Activated CD4-positive, alpha-beta T cell treated with anti-CD3 and anti-CD28 coated beads, Interleukin-2, amount 10 ng/mL, durations not matched to agents 24 days and 14 days (primary cell): ENCODE measurements at regions of chr12 and their contacts with region 1.

Region 1: GRCh38 chr12:73769337-73769736 is 768.3 kb upstream of the ATXN7L3B start:
- DNase-seq: no peak
- H3K4me3 Mint-ChIP-seq: no peak overlapping the region
- H3K27ac Mint-ChIP-seq: no peak overlapping the region
- H3K4me1 Mint-ChIP-seq: no peaks in the 10 kb centered on the region
- H3K27me3 Mint-ChIP-seq: no peaks in the 10 kb centered on the region

Region 2: DNA sequence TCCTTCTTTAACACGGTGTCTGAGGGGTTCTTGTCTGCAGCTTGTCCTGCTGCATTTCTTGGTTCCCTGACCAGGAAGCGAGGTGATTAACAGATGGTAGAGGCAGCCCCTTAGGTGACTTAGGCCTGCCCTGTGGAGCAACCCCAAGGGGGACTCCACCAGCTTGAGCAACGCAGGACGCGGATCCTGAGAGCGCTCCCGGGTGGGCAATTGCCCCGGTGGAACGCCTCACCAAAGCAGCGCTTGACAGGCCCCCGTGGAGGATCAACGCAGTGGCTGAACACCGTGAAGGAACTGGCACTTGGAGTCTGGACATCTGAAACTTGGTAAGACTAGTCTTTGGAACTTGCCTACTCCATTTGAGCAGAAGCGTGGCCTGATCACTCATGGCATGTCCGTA is 495.4 kb after region 1 on chr12:
- intact Hi-C with region 1: loop called (anchors 5 kb)
- DNase-seq: no peak
- H3K4me3 Mint-ChIP-seq: no peak overlapping the region
- H3K27ac Mint-ChIP-seq: no peak overlapping the region
- H3K4me1 Mint-ChIP-seq: no peaks in the 10 kb centered on the region
- H3K27me3 Mint-ChIP-seq: no peaks in the 10 kb centered on the region